Ascending aorta (tissue), 2 donors: ENCODE measurements at regions of chr10 and their contacts with region 1.

Region 1: DNA sequence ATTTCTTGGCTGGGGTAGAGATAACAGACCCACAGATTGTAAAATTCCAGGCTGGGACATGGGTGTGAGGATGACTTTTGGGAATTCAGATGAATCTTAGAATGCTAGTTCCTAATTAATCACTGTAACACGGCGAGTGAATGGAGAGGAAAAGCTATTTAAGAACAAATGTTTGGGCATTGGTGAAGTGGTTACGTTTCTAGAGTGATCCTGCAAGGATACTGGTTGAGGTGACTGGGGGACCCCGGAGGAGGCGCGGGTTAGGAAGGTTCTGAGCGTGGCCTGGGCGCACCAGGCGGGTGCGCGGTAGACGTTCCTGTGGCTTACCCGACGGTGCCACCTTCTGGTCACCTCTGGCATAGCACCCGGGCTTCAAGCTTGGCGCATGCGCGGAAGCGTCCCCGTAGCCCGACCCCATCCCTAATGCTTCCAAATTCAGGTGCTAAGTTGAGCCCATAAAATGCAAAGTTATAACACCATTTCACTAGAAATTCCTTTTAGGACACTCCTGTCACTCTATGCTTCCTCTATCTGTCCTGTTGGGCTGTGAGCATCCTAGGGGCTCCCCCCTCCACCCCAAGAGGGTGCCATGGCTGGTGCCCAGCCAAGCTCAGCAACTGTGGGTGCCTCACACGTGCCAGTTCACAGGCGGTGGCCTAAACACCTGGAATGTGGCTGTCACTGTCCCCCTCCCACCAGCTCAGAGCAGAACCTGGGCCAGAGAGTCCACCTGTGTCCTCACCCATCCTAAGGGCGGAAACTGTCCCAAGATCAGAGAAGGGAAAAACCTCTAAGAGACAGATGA is 104.5 kb downstream of the PTPRE start:
- DNase-seq: peak; percentile 23 to 87
- H3K4me3 ChIP-seq: no peak overlapping the region
- H3K27ac ChIP-seq: no peak overlapping the region
- H3K4me1 ChIP-seq: no peaks in the 10 kb centered on the region
- H3K27me3 ChIP-seq: no peaks in the 10 kb centered on the region
- CTCF ChIP-seq: peak; percentile 98 to 99 (median 99)

Region 2: DNA sequence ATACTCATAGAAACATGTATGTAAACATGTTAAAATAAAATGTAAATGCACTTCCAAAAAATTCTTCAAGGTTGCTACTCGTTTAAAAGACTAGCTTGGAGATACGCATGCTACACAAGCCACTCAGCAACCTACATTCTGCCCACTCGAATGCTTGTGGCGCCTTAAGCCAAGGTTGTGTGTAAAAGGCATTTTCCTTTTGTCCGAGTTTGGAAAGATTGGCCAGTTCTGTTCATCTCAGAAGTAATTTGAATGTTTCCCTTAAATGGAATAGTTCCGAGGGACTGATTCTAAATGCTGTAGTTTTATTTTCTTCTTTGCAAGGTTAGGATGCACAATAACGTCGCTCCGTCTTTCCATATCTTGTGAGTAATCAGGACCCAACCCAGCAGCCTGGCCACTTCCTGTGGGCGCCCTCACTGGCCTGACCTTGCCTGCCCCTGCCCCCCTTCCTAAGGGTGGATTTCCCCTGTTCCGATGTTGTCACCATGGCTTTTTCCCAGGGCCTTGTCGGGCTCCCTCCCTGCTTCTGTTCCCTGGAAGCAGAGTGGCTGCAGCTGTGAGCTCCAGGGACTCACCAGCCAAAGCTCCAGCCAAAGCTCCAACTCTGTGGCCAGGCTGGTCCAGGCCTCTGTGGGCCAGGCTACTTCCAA is 33.9 kb before region 1 on chr10:
- intact Hi-C with region 1: loop called (anchors 1 kb)
- DNase-seq: peak; percentile 54 to 91
- H3K4me3 ChIP-seq: peak overlapping the region; percentile 41 to 53
- H3K27ac ChIP-seq: peak overlapping the region; percentile 74 to 75
- H3K4me1 ChIP-seq: peaks cover 7 to 17% of the 10 kb centered on the region in 2 donors
- H3K27me3 ChIP-seq: no peaks in the 10 kb centered on the region
- CTCF ChIP-seq: no peak

Region 3: DNA sequence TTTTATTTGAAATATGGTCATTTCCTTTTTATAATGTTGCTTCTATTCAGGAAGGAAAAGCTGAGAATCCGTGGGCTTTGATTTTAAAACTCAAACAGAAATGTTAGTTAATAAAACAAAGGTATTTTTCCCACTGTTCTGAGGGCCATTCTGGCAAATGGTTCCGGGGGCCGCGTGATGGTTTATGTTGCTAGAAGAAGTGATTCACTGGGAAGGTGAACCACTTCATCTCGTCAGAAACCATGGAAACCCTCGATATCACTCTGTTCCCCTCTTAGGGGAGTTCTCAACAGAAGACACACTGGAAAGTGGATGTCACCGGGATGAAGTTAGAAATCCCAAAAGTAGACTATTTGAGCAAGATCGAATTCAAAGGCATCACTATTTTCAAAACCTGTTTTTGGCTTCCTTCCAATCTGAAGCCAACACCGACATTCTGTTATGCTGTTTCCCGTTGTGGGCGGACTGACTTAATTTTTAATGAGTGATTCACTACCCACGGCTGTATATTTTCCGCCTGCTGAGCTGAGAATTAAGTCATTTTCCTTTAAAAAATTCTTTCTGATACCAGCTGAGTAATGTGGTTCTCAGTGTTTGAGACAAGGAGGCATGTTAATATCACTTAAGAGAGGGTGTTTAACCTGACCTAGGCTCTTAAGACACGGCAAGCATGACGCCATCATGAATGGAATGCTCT is 20.4 kb before region 1 on chr10:
- intact Hi-C with region 1: loop called (anchors 2 kb)
- DNase-seq: peak in 1 of 2 donors; percentile 65
- H3K4me3 ChIP-seq: no peak overlapping the region
- H3K27ac ChIP-seq: peak overlapping the region; percentile 67 to 71
- H3K4me1 ChIP-seq: peaks cover 8 to 21% of the 10 kb centered on the region in 2 donors
- H3K27me3 ChIP-seq: no peaks in the 10 kb centered on the region
- CTCF ChIP-seq: no peak

Region 4: DNA sequence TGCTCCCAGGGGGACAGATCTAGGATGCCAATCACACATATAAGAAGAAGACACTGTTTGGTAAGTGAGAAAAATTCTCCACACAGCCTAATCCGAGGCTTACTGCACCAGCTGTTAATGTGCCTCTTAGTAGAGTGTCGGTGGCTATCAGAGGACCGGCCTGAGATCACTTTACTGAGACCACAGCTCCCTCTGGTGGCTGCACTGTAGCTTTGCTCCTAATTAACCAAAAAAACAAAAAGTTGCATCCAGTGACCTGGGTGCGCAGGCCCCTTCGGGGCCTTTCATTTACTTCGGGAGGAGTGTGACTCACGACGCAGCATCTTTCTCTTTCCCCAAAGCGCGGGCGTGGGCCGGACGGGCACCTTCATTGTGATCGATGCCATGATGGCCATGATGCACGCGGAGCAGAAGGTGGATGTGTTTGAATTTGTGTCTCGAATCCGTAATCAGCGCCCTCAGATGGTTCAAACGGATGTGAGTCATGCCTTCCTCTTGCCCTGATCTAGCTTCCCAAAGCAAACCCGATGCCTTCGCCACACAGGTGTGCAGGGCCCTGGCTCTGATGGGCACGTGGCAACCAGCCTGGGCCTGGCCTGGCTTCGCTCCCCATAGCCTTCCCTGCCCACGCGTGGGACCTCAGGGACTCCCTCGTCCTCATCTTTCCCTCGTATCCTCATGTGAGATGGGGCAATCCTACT is 58.1 kb after region 1 on chr10:
- intact Hi-C with region 1: loop called (anchors 1 kb)
- DNase-seq: peak in 1 of 2 donors; percentile 80
- H3K4me3 ChIP-seq: no peak overlapping the region
- H3K27ac ChIP-seq: no peak overlapping the region
- H3K4me1 ChIP-seq: peaks cover 4 to 7% of the 10 kb centered on the region in 2 donors
- H3K27me3 ChIP-seq: no peaks in the 10 kb centered on the region
- CTCF ChIP-seq: peak; percentile 77 to 84 (median 84)